CD8-positive, alpha-beta T cell (primary cell): ENCODE measurements at regions of chr6 and their contacts with region 1.

Region 1: DNA sequence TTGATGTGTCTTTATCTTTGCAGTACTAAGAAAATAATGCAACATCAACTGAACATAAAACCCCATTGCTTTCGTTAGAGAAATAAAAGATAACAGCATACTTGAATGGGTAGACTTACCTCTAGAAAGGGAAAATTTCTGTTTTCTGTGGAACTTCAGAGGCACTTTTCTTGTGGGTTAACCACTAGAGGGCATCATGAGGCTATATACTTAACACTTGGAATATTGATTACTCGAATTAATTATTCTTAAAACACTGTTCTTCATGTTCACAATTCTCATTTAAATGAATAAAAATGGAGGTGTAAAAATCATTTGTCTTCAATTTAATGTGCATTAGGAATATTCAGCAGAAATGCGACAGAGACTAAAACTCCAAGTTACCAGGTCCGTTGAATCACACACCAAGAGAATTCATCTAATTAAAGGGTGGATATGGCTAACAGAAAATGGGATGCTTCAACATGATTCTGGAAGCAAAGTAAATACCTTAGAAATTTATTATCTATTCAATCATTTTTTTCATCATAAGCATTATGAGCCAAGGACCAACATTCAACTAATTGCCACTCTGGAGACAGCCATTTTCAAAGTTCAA is 330.8 kb upstream of the PREP start:
- DNase-seq: peak in 2 of 9 experiments; percentile 53 to 64
- ATAC-seq: no peak
- H3K4me3 ChIP-seq: no peak overlapping the region
- H3K4me3 Mint-ChIP-seq: no peak overlapping the region
- H3K27ac ChIP-seq: no peak overlapping the region
- H3K27ac Mint-ChIP-seq: no peak overlapping the region
- H3K4me1 ChIP-seq: no peaks in the 10 kb centered on the region
- H3K4me1 Mint-ChIP-seq: peaks cover 7% of the 10 kb centered on the region
- H3K27me3 ChIP-seq: no peaks in the 10 kb centered on the region
- H3K27me3 Mint-ChIP-seq: no peaks in the 10 kb centered on the region
- CTCF ChIP-seq: peak; percentile 73

Region 2: DNA sequence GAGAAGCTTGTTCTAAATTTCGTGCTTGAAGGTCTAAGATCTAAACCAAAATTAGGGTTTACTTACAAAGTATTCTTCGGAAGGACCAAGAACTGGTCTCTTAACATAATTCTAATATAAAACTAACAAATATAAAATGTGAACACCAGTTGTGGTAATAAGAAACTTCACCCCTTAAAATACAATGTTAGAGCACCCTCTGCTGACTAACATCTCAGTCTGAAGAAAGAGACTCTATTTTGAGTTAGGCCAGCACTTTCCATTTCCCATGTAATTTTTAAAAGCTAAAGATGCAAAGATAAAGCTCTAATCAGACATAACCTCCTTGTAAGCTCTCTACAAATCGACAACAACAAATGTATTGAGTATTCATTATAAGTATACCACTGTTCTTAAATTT is 567.3 kb after region 1 on chr6:
- CTCF ChIA-PET with region 1: interaction called, 3 read pairs
- POLR2A ChIA-PET with region 1: no interaction called
- intact Hi-C with region 1: loop called (anchors 1 to 5 kb)
- DNase-seq: peak in 2 of 9 experiments; percentile 41 to 55
- ATAC-seq: no peak
- H3K4me3 ChIP-seq: no peak overlapping the region
- H3K4me3 Mint-ChIP-seq: no peak overlapping the region
- H3K27ac ChIP-seq: no peak overlapping the region
- H3K27ac Mint-ChIP-seq: no peak overlapping the region
- H3K4me1 ChIP-seq: no peaks in the 10 kb centered on the region
- H3K4me1 Mint-ChIP-seq: peaks cover 14% of the 10 kb centered on the region
- H3K27me3 ChIP-seq: no peaks in the 10 kb centered on the region
- H3K27me3 Mint-ChIP-seq: no peaks in the 10 kb centered on the region
- CTCF ChIP-seq: peak; percentile 40